Activated naive CD4-positive, alpha-beta T cell treated with anti-CD3 and anti-CD28 coated beads for 36 hours (primary cell): ENCODE measurements at regions of chr2 and their contacts with region 1.

Region 1: DNA sequence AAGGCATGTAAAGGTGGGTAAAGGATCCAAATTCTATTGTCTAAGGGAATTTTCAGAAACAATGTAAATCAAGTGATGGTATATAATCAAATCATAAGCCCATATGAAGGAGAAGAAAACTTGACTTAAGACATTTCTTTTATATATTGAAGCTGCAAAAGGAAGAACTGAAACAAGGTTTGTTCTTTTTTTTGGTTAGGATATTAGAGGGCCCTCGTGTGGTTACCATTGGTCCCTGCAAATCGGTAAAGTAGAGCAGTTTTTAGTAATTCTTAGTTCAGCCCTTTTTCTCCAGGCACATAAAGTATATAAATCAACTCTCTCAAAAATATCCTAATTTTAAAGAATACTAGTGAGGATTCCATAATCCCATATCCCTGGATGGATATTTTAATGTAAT is 105.6 kb upstream of the STK17B start:
- DNase-seq: peak; percentile 57
- H3K4me3 Mint-ChIP-seq: no peak overlapping the region
- H3K27ac Mint-ChIP-seq: no peak overlapping the region
- H3K4me1 Mint-ChIP-seq: peaks cover 59% of the 10 kb centered on the region
- H3K27me3 Mint-ChIP-seq: no peaks in the 10 kb centered on the region

Region 2: DNA sequence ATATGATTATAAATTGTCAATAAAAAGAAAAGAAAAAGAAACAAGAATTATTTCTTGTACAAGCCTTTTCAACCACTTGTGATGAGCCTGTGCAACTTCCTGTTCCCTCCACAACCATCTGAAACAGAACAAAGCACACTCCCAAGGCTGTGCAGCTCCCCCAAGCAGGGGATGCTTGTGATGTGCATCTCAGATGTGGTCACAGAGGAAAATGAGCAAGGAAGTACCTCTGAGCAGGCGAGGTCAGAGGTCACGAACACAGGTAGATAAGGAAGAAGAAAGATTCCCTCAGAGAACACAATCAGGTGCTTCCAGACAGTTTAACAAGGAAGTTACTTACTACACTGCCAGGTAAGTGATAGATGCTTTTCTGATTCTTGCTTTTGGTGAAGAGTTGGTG is 894.8 kb before region 1 on chr2:
- CTCF ChIA-PET with region 1: no interaction called
- intact Hi-C with region 1: no loop called
- DNase-seq: peak; percentile 51
- H3K4me3 Mint-ChIP-seq: no peak overlapping the region
- H3K27ac Mint-ChIP-seq: peak overlapping the region; percentile 32
- H3K4me1 Mint-ChIP-seq: peaks cover 11% of the 10 kb centered on the region
- H3K27me3 Mint-ChIP-seq: no peaks in the 10 kb centered on the region

Region 3: DNA sequence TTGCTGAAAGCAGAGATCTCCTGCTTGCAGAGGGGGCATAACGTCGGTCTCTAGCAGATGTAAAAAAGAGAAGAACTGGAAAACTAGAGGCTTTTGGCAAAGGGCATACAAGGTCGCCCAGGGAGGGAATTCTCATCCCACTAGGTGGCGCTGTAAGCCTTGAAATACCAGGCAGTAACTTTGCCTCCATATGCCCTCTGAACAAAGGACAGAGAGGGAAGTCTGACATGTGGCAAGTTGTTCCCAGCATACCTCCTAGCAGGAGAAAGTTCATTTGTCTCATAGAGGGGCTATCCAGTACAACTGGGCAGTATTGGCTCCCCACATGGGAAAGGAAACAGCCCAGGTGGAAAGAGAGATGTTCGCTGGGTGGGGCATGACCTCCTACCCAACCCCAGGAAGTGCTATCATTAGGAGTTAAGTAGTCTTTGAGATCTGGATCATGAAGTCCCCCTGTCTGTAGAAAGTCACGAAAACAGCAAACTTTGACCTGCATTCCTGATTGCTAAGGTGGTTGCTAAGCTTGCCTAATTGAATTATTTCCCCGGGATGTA is 145.5 kb before region 1 on chr2:
- CTCF ChIA-PET with region 1: interaction called, 10 read pairs
- intact Hi-C with region 1: loop called (anchors 1 kb)
- DNase-seq: peak; percentile 70
- H3K4me3 Mint-ChIP-seq: no peak overlapping the region
- H3K27ac Mint-ChIP-seq: peak overlapping the region; percentile 70
- H3K4me1 Mint-ChIP-seq: peaks cover 12% of the 10 kb centered on the region
- H3K27me3 Mint-ChIP-seq: no peaks in the 10 kb centered on the region

Region 4: GRCh38 chr2:196171248-196171871 is 105.6 kb before region 1 on chr2 and contains the start of gene STK17B:
- CTCF ChIA-PET with region 1: interaction called, 33 read pairs
- intact Hi-C with region 1: loop called (anchors 1 kb)
- DNase-seq: peak; percentile 98
- H3K4me3 Mint-ChIP-seq: peak within 1 kb of the TSS; percentile 93
- H3K27ac Mint-ChIP-seq: peak within 1 kb of the TSS; percentile 92
- H3K4me1 Mint-ChIP-seq: peaks cover 34% of the 10 kb centered on the region
- H3K27me3 Mint-ChIP-seq: no peaks in the 10 kb centered on the region
- total RNA-seq, gene STK17B: 141 to 143 TPM

Region 5: DNA sequence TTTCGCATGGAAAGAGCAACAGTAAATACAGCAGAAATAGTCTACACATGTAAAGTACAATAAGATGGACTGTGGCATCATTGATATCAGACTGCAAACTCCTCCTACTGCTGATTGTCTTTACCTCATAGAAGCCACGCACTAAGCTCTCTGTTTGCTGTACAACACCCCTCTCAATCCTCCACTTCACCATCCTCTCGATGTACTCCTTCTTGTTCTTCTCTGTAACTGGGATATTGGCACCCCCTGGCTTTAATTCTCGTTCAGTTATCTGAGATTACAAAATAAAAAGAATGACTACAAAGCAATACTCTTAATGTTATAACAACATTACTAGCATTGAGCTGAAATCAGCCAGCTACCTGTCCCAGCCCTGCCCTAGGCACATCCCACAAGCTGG is 56.3 kb before region 1 on chr2:
- CTCF ChIA-PET with region 1: interaction called, 7 read pairs
- intact Hi-C with region 1: loop called (anchors 1 kb)
- DNase-seq: peak; percentile 55
- H3K4me3 Mint-ChIP-seq: peak overlapping the region; percentile 13
- H3K27ac Mint-ChIP-seq: peak overlapping the region; percentile 0
- H3K4me1 Mint-ChIP-seq: peaks cover 81% of the 10 kb centered on the region
- H3K27me3 Mint-ChIP-seq: no peaks in the 10 kb centered on the region

Region 6: DNA sequence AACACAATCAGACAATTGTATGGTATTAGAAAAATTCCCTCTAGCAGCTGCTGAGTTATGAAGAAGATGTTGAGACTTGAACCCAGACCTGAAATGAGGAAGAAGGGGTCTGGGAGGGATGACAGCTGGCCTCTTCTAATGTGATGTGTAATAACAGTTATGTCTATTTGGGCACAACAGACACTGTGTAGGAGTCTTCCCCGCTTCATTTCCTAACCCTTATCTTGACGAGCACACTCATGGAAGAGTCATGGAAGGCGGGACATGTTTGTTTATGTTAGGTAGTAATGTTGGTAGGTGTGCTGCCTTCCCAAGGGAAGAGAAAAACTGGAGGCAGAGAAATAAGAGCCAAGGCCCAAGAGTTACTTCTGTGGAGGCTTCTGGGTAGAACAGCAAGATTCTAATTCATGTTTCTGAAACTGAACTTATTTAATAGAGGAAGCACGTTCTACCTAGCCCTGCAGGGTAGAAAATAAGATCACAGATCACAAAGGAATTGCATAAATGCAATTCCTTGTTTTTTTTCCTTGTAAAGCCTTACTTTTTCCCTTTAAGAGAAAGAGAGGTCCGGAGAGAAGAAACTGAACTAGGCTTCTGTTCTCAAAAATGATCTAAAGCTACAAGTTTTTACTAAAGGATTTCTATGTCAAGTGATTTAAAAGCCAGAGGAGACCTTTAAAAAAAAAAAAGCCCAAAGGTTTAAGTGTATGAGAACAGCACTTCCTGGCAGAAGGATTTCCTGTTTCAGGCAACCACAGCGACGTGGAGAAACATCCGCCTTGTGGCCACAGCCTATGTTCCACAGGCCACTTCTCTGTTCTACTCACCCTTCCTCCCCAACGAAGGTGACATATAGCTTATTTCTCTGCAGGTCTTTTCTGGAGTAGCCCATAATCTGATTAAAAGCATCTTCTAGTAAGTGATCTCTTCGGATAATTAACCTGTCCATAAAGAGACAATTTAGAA is 37.1 kb before region 1 on chr2:
- CTCF ChIA-PET with region 1: interaction called, 15 read pairs
- intact Hi-C with region 1: loop called (anchors 1 kb)
- DNase-seq: peak; percentile 93
- H3K4me3 Mint-ChIP-seq: peak overlapping the region; percentile 49
- H3K27ac Mint-ChIP-seq: peak overlapping the region; percentile 88
- H3K4me1 Mint-ChIP-seq: peaks cover 85% of the 10 kb centered on the region
- H3K27me3 Mint-ChIP-seq: no peaks in the 10 kb centered on the region

Region 7: DNA sequence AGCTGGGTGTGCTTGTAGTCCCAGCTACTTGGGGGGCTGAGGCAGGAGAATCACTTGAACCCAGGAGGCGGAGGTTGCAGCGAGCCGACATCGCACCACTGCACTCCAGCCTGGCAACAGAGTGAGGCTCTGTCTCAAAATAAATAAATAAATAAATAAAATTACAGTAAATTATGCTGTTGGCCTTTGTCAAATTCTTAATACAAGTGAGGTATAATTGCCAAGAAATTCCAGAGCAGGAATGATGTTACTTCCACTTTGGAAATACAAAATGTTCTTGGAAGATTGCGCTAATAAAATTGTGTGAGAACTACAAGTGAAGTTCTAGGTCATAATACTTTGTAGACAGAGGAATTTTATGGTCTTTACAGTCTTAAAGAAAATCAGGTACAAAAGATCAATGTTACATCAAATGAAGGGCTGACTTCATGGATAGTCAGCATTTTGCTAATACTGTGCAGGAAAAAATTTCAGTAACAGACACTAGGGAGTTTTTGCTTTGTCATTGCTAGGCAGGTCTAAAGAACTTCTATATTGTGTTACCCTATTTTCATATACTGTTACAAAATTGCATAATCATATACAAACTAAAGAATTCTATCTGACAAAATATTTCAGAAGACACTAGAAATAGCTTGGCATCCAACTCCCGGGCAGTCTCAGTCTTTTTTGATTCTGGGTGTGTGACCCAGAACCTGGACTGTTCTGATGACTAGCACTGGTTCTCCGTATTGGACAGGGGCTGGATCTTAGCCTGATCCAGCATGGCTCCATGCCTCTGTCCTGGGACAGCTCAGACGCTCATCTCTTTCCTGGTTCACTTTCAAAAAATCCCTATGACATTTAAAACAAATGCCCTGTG is 29.7 kb before region 1 on chr2:
- CTCF ChIA-PET with region 1: interaction called, 12 read pairs
- intact Hi-C with region 1: no loop called
- DNase-seq: no peak
- H3K4me3 Mint-ChIP-seq: no peak overlapping the region
- H3K27ac Mint-ChIP-seq: no peak overlapping the region
- H3K4me1 Mint-ChIP-seq: peaks cover 82% of the 10 kb centered on the region
- H3K27me3 Mint-ChIP-seq: no peaks in the 10 kb centered on the region

Region 8: DNA sequence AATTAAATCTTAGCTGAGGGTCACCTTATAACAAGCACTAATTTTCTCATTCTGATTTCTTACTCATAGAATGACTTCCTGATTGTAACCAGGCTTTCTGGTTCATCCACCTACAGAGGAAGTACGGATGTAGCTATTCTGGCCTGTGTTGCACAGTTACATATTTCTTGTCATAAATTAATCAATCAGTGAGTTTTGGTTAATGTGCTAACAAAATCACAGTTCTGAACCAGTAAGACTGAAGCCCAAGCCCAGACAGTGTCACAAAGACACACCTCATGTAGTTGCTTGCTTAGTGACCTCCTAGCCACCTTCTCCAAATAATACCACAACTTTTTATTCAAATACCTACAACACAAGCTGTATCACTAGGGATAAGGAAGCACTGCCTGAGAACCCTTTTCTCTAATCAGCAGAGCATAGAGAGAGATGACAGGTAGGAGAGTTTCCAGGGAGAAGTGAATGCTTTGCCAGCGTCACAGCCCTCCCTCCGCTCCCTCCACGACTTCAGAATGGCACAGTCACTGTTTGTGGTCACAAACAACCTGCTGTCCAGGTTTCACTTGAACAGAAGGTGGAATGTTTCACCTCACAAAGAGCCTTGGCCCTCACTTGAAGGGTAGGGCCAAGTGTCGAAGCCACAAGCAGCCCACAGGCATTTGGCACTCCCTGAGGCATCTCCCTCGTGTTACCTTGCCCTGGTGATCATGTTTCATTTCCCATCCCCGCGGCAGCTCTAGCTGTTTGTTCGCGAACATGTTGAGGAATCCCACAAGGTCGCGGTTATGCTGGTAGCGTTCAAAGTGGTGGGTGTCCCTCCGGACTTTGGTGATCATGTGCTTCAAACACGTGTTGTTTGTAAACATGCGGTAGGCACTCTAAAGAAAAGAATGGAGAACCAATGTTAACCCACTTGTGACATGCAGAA is 15.1 kb after region 1 on chr2:
- CTCF ChIA-PET with region 1: interaction called, 8 read pairs
- intact Hi-C with region 1: loop called (anchors 1 kb)
- DNase-seq: no peak
- H3K4me3 Mint-ChIP-seq: no peak overlapping the region
- H3K27ac Mint-ChIP-seq: no peak overlapping the region
- H3K4me1 Mint-ChIP-seq: peaks cover 46% of the 10 kb centered on the region
- H3K27me3 Mint-ChIP-seq: no peaks in the 10 kb centered on the region